ENCODE measurements at regions of chr10 and their contacts with region 1.

Region 1: GRCh38 chr10:68156373-68157185 is 47.3 kb downstream of the MYPN start:
- DNase-seq: peak in 1 of 2 donors; percentile 81
- H3K4me3 ChIP-seq: no peak overlapping the region
- H3K27ac ChIP-seq: no peak overlapping the region
- H3K4me1 ChIP-seq: peaks cover 0 to 9% of the 10 kb centered on the region in 2 donors
- H3K27me3 ChIP-seq: no peaks in the 10 kb centered on the region
- CTCF ChIP-seq: peak; percentile 59 to 79 (median 69)

Region 2: GRCh38 chr10:67849331-67850011 is 307.1 kb before region 1 on chr10:
- intact Hi-C with region 1: loop called (anchors 2 kb)
- DNase-seq: peak; percentile 78 to 98
- H3K4me3 ChIP-seq: peak overlapping the region; percentile 77 to 87
- H3K27ac ChIP-seq: peak overlapping the region; percentile 92 to 94
- H3K4me1 ChIP-seq: peaks cover 3 to 5% of the 10 kb centered on the region in 2 donors
- H3K27me3 ChIP-seq: no peaks in the 10 kb centered on the region
- CTCF ChIP-seq: no peak

Region 3: DNA sequence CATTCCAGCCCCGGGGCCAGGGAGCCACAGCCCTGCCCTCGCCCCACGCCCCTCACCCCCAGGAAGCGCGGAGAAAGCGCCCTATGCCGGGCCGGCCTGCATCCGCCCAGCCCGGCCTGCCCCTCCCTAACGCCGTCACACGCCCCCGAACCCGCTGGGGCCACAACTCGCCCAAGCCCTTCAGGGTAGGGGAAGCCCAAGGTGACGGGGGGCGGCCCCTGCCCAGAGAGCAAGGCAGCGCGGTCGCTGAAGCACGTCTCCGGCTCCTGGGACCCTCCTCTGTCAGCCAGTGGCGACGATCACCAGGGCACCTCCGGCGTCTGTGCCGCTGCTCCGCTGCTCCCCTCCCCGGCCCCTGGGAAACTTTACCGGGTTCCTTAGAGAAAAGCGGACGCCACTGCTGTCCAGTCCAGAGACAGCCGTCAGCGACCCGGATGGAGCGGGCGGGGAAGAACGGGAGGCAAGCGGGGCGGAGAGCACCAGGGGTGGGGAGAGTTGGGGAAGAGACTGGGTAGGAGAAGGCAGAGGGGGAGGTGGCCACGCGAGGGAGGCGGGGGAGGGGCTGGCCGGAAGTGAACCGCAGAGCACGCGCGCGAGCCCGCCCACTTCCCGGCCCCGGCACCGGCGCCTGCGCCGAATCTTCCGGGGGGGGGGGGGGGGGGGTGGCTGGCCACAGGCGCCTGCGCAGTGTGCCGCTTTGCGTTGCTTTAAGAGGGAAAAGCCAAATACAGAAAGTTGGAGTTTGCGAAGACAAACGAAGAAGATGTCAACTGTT is 81.6 kb before region 1 on chr10 and contains the start of gene HERC4:
- intact Hi-C with region 1: loop called (anchors 2 kb)
- DNase-seq: peak; percentile 72 to 97
- H3K4me3 ChIP-seq: peak within 1 kb of the TSS; percentile 87 to 99
- H3K27ac ChIP-seq: peak within 1 kb of the TSS; percentile 99 to 100
- H3K4me1 ChIP-seq: peaks cover 0 to 6% of the 10 kb centered on the region in 2 donors
- H3K27me3 ChIP-seq: no peaks in the 10 kb centered on the region
- CTCF ChIP-seq: no peak
- total RNA-seq, gene HERC4: 15.0 TPM

Region 4: DNA sequence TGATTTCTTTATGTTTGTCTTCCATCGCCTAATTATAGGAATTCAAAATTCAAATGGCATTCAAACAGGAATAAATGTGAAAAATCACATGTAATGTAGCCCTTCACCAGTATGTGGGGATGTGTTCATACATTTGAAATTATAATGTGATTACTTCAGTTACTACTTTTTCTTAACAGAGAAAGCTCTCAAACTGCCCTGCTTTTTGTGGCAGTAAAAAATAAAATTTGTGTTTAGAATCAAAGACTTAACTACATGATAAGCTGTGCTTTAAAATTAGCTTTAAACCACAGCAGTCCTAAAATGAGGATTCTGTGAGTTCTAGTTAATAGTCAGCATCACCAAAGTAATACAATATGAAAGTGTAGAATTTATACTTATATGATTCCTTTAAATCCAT is 73.7 kb before region 1 on chr10:
- intact Hi-C with region 1: loop called (anchors 1 kb)
- DNase-seq: no peak
- H3K4me3 ChIP-seq: no peak overlapping the region
- H3K27ac ChIP-seq: no peak overlapping the region
- H3K4me1 ChIP-seq: no peaks in the 10 kb centered on the region
- H3K27me3 ChIP-seq: no peaks in the 10 kb centered on the region
- CTCF ChIP-seq: peak; percentile 34 to 42 (median 40)

Region 5: DNA sequence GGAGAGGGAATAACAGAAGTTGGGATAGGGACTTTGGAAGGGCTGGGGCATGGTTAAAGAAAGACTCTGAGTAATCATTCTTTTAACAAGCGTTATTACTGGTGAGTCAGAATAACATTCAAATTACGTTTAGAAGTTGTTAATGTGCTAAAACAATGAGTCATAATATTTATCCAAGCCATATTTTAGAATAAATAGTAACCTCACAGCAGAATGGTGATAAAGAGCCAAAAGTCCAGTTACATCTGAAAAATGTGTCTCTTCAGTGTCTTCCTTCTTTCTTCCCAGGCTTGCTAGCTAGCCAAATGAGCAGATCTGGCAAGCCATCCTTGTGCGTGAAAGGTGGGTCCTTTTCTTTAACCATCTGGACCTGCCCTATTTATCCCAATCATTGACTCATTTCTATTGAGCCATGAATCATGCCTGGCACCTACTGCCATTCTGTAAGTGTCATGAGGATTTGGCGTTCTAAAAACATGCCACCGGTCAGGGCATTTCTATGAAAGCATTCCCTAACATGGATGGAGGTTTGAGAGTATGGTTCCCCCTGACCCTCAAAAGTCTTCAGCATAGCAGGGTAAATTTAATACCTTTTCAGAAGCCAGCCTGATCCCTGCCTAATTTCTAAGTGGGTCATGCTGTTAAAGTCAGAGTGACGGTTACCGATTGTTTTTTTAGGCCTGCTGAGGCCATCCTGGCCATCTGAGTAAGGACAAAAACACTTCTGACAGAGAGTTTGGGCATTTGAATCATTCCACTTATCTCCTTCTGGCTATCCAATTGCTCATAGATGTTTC is 20.5 kb before region 1 on chr10:
- intact Hi-C with region 1: loop called (anchors 1 kb)
- DNase-seq: peak in 1 of 2 donors; percentile 73
- H3K4me3 ChIP-seq: no peak overlapping the region
- H3K27ac ChIP-seq: peak overlapping the region; percentile 54 to 70
- H3K4me1 ChIP-seq: peaks cover 0 to 8% of the 10 kb centered on the region in 2 donors
- H3K27me3 ChIP-seq: no peaks in the 10 kb centered on the region
- CTCF ChIP-seq: no peak

Region 6: DNA sequence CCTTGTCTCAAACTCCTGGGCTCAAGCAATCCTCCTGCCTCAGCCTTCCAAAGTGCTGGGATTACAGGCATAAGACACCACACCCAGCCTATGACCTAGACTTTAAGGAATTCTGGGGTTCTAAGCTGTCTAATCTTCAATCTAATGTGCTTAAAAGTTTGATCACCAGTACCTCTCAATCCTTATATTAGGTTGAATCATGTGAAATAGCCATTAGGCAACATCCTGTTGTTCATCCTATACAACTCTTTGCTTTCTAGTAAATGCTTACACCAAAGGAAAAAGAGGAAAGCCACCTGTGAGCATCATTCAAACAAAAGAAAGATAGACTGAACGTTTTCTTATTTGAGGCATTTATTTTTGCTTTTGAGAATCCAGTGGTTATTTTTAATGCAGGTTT is 19.4 kb after region 1 on chr10:
- intact Hi-C with region 1: no loop called
- DNase-seq: no peak
- H3K4me3 ChIP-seq: no peak overlapping the region
- H3K27ac ChIP-seq: no peak overlapping the region
- H3K4me1 ChIP-seq: no peaks in the 10 kb centered on the region
- H3K27me3 ChIP-seq: no peaks in the 10 kb centered on the region
- CTCF ChIP-seq: no peak

Region 7: DNA sequence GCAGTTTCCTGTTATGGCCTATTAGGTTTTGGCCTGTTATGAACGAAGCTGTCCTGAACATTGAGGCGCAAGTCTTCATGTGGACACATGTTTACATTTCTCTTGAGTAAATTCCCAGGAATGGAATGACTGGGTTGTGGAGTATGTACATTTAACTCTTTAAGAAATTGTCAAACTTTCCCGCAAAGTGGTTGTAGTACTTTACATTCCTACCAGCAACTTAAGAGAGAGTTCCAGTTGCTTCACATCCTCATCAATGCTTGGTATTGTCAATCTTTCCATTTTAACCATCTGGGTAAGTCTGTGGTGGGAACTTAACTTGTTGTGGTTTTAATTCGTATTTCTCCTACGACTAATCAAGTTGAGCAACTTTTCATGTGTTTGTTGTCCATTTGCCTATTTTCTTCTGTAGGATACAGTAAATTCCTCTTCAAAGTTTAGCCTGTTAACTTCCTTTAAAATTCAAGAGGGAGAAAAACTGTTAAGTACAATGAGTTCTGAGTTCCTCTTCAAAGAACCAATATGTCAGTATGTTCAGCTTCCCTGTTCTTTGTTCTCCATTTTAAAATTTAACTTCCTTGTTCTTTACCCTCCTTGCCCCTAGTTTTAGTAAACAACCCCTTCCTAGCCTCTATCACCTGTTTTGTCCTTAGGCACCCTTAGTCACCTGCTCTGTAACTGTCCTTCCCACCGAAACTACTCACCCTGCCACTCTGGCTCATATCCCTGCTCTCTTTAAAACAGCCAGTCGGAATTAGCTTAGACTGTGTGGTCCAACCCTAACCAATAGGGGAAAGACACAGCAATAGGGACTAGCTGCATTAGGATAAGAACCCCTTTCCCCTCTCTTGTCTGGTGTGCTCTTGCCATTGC is 1547.4 kb after region 1 on chr10:
- intact Hi-C with region 1: no loop called
- DNase-seq: no peak
- H3K4me3 ChIP-seq: no peak overlapping the region
- H3K27ac ChIP-seq: no peak overlapping the region
- H3K4me1 ChIP-seq: no peaks in the 10 kb centered on the region
- H3K27me3 ChIP-seq: no peaks in the 10 kb centered on the region
- CTCF ChIP-seq: no peak